ENCODE measurements at regions of chr22 and their contacts with region 1.

Region 1: GRCh38 chr22:17171313-17172171 is 12.5 kb upstream of the HDHD5 start:
- DNase-seq: peak; percentile 89
- H3K4me3 Mint-ChIP-seq: peak overlapping the region; percentile 80
- H3K27ac Mint-ChIP-seq: peak overlapping the region; percentile 56
- H3K4me1 Mint-ChIP-seq: peaks cover 7% of the 10 kb centered on the region
- H3K27me3 Mint-ChIP-seq: no peaks in the 10 kb centered on the region

Region 2: DNA sequence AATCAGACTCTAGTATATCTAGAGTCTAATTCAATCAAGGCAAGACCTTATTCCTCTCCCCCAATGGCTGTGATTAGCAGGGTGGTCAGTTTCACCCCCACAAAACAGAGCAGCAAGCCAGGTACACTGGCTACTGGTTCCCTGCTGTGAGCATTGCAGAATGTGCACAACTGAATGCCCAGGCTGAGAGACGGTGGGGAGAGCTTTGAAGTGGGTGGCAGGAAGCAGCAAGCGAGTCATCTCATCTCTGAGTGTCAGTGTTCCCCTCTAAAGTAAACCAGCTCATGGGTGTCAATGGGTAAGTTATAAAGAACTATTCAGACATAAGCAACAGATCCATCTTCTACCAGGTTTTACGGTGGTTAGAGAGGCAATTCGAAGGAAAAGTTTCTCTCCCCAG is 201.1 kb before region 1 on chr22:
- CTCF ChIA-PET with region 1: no interaction called
- POLR2A ChIA-PET with region 1: no interaction called
- intact Hi-C with region 1: no loop called
- DNase-seq: peak; percentile 18
- H3K4me3 Mint-ChIP-seq: no peak overlapping the region
- H3K27ac Mint-ChIP-seq: no peak overlapping the region
- H3K4me1 Mint-ChIP-seq: peaks cover 3% of the 10 kb centered on the region
- H3K27me3 Mint-ChIP-seq: peaks cover 22% of the 10 kb centered on the region

Region 3: DNA sequence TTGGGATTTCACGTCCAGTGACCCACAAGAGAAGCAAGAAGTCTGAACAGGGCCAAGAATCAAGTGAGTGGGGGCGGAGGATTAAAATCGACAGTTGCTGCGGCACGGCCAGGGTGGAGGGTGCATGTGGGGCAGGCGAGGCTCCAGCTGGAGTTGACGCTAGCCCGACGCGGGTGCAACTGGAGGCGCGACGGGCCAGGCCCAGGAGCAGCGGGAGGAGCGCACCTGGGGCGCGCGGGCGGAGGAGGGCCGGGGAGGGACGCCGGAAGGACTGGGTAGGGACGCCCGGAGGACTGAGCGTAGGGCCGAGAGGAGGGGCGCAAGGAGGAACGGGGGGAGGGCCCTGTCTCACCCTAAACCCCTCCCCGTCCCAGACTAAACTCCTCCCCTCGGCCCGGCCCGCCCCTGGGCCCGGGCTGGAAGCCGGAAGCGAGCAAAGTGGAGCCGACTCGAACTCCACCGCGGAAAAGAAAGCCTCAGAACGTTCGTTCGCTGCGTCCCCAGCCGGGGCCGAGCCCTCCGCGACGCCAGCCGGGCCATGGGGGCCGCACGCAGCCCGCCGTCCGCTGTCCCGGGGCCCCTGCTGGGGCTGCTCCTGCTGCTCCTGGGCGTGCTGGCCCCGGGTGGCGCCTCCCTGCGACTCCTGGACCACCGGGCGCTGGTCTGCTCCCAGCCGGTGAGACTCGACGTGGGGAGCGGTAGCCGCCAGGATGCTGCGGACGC is 86.8 kb before region 1 on chr22 and contains the start of gene IL17RA:
- CTCF ChIA-PET with region 1: interaction called, 18 read pairs
- POLR2A ChIA-PET with region 1: interaction called, 6 read pairs
- intact Hi-C with region 1: no loop called
- DNase-seq: peak; percentile 96
- H3K4me3 Mint-ChIP-seq: peak within 1 kb of the TSS; percentile 79
- H3K27ac Mint-ChIP-seq: peak within 1 kb of the TSS; percentile 84
- H3K4me1 Mint-ChIP-seq: peaks cover 45% of the 10 kb centered on the region
- H3K27me3 Mint-ChIP-seq: no peaks in the 10 kb centered on the region
- total RNA-seq, gene IL17RA: 12.5 to 14.7 TPM

Region 4: GRCh38 chr22:17119481-17120202 is 51.9 kb before region 1 on chr22:
- CTCF ChIA-PET with region 1: interaction called, 18 read pairs
- POLR2A ChIA-PET with region 1: no interaction called
- intact Hi-C with region 1: loop called (anchors 5 kb)
- DNase-seq: peak; percentile 41
- H3K4me3 Mint-ChIP-seq: no peak overlapping the region
- H3K27ac Mint-ChIP-seq: no peak overlapping the region
- H3K4me1 Mint-ChIP-seq: peaks cover 44% of the 10 kb centered on the region
- H3K27me3 Mint-ChIP-seq: peaks cover 10% of the 10 kb centered on the region

Region 5: DNA sequence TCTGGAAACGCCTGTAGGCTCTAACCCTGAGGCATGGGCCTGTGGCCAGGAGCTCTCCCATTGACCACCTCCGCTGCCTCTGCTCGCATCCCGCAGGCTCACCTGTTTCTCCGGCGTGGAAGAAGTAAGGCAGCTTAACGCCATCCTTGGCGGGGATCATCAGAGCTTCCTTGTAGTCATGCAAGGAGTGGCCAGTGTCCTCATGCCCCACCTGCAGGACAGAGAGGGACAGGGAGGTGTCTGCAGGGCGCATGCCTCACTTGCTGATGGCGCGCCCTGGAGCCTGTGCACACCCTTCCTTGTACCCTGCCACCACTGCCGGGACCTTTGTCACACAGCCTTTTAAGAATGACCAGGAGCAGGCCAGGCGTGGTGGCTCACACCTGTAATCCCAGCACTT is 16.7 kb after region 1 on chr22:
- CTCF ChIA-PET with region 1: interaction called, 26 read pairs
- POLR2A ChIA-PET with region 1: interaction called, 5 read pairs
- intact Hi-C with region 1: no loop called
- DNase-seq: no peak
- H3K4me3 Mint-ChIP-seq: no peak overlapping the region
- H3K27ac Mint-ChIP-seq: no peak overlapping the region
- H3K4me1 Mint-ChIP-seq: no peaks in the 10 kb centered on the region
- H3K27me3 Mint-ChIP-seq: no peaks in the 10 kb centered on the region

Region 6: DNA sequence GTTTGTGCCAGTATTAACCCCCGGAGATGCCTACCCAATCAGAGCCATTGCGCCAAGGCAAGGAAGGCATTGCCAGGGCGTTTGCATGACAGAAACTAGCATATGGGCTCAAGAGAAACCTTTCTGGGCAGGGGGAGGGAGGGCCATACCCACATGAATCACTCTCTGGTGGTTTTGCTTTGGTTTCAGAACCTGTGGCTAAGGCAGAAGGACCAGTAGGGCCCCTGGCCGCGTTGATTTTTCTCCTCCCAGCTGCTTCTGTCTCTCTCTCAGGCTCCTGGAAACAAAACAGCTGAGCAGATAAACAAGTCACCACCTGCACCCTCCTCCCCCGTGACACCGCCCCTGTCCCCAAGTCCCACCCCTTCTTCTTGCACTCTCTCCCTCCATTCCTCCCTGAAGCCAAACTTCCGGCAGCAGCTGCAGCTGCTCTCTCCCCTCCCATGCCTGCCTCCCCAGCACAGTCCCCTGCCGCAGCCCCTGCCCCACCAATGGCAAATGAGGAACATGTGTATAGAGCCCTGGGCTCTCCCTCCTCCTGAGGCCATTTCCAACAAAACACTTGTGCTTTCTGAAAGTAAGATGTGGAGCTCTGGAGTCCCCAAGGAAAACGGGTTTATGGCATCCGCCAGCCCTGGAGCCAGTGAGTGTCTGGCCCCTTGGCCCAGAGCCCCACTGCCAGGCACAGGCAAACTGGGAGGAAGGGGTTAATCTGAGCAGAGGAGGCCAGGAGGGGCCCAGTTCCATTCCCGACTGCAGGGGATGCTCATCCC is 86.7 kb after region 1 on chr22:
- CTCF ChIA-PET with region 1: interaction called, 6 read pairs
- POLR2A ChIA-PET with region 1: no interaction called
- intact Hi-C with region 1: loop called (anchors 2 kb)
- DNase-seq: peak; percentile 84
- H3K4me3 Mint-ChIP-seq: no peak overlapping the region
- H3K27ac Mint-ChIP-seq: peak overlapping the region; percentile 45
- H3K4me1 Mint-ChIP-seq: peaks cover 19% of the 10 kb centered on the region
- H3K27me3 Mint-ChIP-seq: no peaks in the 10 kb centered on the region

Region 7: GRCh38 chr22:17376950-17377349 is 205.4 kb after region 1 on chr22:
- CTCF ChIA-PET with region 1: no interaction called
- POLR2A ChIA-PET with region 1: no interaction called
- intact Hi-C with region 1: no loop called
- DNase-seq: no peak
- H3K4me3 Mint-ChIP-seq: no peak overlapping the region
- H3K27ac Mint-ChIP-seq: no peak overlapping the region
- H3K4me1 Mint-ChIP-seq: no peaks in the 10 kb centered on the region
- H3K27me3 Mint-ChIP-seq: peaks cover 28% of the 10 kb centered on the region